ENCODE measurements at regions of chr2 and their contacts with region 1.

Region 1: DNA sequence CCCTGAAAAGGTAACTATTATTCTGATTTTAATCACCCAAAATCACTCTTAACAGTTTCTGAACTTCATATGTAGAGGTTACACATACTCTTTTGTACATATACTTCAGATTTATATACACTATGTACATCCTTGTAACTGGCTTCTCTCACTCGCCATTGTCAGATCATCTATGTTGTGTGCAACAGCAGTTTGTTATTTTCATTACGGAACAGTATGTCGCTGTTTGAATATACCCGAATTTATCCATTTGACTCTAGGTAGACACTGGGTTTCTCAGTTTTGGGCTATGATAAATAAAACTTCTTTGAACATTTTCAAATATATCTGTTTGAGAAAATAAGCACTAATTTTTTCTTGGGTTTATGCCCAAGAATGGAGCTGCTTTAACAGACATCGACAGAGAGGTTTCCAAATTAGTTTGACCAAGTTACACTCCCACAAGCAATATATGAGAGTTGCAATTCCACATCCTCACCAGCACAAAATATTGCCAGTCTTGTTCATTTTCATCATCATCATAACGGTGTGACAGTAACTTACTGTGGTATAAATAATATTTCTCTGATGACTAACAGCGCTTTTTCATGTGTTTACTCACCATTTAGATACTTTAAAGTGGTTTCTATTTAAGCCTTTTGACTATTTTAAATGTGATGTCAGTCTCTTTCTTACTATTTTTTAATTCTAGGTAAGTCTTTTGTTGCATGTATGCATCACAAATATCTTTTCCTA is 80.9 kb downstream of the SMC6 start:
- DNase-seq: no peak
- ATAC-seq: no peak
- H3K4me3 Mint-ChIP-seq: no peak overlapping the region
- H3K27ac Mint-ChIP-seq: no peak overlapping the region
- H3K4me1 Mint-ChIP-seq: no peaks in the 10 kb centered on the region
- H3K27me3 Mint-ChIP-seq: no peaks in the 10 kb centered on the region
- CTCF ChIP-seq: no peak

Region 2: DNA sequence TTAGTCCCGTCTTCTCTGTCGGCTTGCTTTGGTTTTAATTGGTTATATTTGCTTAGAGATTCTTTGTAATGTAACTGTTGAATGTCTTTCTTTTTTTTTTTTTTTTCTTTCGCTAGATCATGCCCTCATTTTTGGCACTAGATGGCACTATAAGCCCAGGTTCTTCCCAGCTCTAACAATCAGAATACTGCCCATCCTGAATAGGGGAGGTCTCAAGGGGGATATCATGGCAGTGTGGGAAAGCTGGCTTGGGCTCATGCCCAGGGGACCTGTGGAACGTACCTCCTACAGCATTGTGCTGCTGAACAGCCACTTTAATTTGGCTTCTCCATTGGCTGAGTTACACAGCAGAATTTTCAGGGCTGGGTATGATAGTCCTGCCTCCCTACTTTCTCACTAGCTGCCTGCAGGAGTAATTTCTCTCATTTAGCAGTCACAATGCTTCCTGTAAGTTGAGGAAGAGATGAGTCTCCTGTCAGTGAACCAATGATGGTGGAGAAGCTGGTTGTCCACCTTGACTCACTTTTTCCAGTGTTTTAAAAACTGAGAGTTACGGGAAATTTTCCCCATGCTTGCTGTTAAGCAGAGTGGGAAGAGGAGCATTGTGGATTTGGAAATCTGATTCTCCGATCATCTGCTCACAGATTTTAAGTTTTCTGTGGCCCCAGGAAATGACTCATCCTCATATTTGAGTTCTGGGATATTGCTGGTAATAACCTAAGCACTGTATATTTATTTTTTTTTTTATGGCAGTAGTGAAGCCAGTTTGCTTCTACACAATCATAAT is 201.7 kb before region 1 on chr2:
- CTCF ChIA-PET with region 1: interaction called, 4 read pairs
- POLR2A ChIA-PET with region 1: no interaction called
- intact Hi-C with region 1: loop called (anchors 1 kb)
- DNase-seq: no peak
- ATAC-seq: no peak
- H3K4me3 Mint-ChIP-seq: no peak overlapping the region
- H3K27ac Mint-ChIP-seq: no peak overlapping the region
- H3K4me1 Mint-ChIP-seq: no peaks in the 10 kb centered on the region
- H3K27me3 Mint-ChIP-seq: peaks cover 12% of the 10 kb centered on the region
- CTCF ChIP-seq: no peak

Region 3: GRCh38 chr2:17658251-17658843 is 14.4 kb before region 1 on chr2:
- CTCF ChIA-PET with region 1: interaction called, 14 read pairs
- POLR2A ChIA-PET with region 1: no interaction called
- intact Hi-C with region 1: loop called (anchors 1 kb)
- DNase-seq: no peak
- ATAC-seq: peak; percentile 50
- H3K4me3 Mint-ChIP-seq: no peak overlapping the region
- H3K27ac Mint-ChIP-seq: peak overlapping the region; percentile 16
- H3K4me1 Mint-ChIP-seq: peaks cover 5% of the 10 kb centered on the region
- H3K27me3 Mint-ChIP-seq: no peaks in the 10 kb centered on the region
- CTCF ChIP-seq: no peak

Region 4: DNA sequence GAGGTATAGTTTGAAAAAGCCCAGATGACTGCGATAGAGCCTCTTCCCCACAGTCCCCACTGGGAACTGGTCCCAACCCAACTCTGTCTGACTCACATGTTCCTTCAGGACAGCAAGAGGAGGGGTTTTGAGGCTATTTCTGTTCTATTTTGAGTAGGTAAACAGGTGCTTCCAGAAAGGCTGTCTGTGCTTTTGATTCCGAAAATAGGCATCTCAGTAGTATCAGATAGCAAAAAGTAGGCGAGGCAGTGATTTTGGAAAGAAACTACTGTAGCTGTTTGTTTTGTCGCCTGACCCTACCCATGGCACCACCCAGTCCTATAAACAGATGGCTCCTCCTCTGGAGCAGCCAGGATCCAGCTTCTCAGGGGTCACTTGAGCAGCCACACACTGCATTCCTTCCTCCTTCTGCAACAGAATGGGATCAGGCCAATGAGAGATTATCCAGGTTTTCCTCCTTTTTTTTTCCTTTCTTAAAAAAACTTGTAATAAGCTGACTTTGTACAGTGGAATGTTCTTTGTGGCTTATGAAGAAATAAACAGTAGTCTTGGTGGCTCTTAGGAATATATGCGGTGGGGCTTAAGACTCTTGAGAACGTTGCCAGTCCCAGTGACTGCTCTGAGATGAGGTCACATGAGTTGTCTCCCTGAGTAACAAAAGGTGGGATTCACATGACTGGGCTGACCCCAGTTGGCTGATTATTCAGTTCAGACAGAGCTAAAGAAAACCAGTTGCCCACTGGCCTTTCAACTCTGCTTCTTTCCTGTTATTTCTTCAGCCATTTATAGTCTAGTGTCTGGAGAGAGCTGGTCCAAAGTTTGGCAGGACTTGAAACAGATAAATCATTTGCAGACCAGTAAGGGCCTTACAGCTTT is 304.4 kb after region 1 on chr2:
- CTCF ChIA-PET with region 1: no interaction called
- POLR2A ChIA-PET with region 1: no interaction called
- intact Hi-C with region 1: no loop called
- DNase-seq: no peak
- ATAC-seq: no peak
- H3K4me3 Mint-ChIP-seq: no peak overlapping the region
- H3K27ac Mint-ChIP-seq: no peak overlapping the region
- H3K4me1 Mint-ChIP-seq: no peaks in the 10 kb centered on the region
- H3K27me3 Mint-ChIP-seq: peaks cover 5% of the 10 kb centered on the region
- CTCF ChIP-seq: no peak

Measured in activated B cell treated with CpG ODN at 0.5 μM for 24 hours (primary cell).